ENCODE measurements at regions of chr10 and their contacts with region 1.

Region 1: GRCh38 chr10:7410862-7411670 is at the start of gene SFMBT2:
- DNase-seq: peak; percentile 70 to 90 (median 83)
- H3K4me3 ChIP-seq: peak within 1 kb of the TSS; percentile 66 to 88 (median 76)
- H3K27ac ChIP-seq: peak within 1 kb of the TSS; percentile 51 to 65
- H3K4me1 ChIP-seq: peaks cover 0 to 22% (median 0%) of the 10 kb centered on the region in 3 donors
- H3K27me3 ChIP-seq: peaks cover 22% of the 10 kb centered on the region
- CTCF ChIP-seq: peak; percentile 9
- total RNA-seq, gene SFMBT2: 15.3 TPM

Region 2: DNA sequence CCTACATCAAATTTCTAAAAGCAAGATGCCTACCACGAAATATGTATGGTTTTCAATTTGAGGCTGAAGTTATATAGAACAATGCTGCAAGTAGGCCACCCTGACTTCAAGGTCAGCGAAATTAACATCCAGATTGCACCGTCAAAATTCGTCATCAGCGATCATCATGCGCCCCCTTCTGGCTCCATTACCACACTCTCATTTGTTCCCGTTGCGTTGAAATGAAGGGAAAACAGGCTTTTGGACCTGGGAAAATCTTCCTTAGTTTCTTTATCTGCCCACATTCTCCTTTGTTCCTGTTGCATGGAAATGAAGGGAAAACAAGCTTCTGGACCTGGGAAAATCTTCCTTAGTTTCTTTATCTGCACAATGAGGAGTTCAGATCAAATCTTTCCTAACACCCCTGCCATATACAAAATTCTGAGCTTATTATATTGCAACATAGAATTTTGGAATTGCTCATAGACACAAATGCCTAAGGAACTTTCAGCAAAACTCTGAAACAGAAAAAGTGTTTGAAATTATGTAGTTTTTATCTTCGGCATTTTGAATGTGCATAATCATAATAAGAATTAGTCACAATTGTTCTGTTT is 732.8 kb before region 1 on chr10:
- intact Hi-C with region 1: loop called (anchors 10 kb)
- DNase-seq: peak in 4 of 5 donors; percentile 39 to 72 (median 59)
- H3K4me3 ChIP-seq: no peak overlapping the region
- H3K27ac ChIP-seq: no peak overlapping the region
- H3K4me1 ChIP-seq: no peaks in the 10 kb centered on the region
- H3K27me3 ChIP-seq: no peaks in the 10 kb centered on the region
- CTCF ChIP-seq: peak; percentile 82

Region 3: GRCh38 chr10:7260412-7260900 is 150.6 kb before region 1 on chr10:
- intact Hi-C with region 1: loop called (anchors 10 kb)
- DNase-seq: peak in 3 of 5 donors; percentile 15 to 87 (median 86)
- H3K4me3 ChIP-seq: no peak overlapping the region
- H3K27ac ChIP-seq: no peak overlapping the region
- H3K4me1 ChIP-seq: peaks cover 0 to 2% (median 0%) of the 10 kb centered on the region in 3 donors
- H3K27me3 ChIP-seq: no peaks in the 10 kb centered on the region
- CTCF ChIP-seq: peak; percentile 72

Region 4: DNA sequence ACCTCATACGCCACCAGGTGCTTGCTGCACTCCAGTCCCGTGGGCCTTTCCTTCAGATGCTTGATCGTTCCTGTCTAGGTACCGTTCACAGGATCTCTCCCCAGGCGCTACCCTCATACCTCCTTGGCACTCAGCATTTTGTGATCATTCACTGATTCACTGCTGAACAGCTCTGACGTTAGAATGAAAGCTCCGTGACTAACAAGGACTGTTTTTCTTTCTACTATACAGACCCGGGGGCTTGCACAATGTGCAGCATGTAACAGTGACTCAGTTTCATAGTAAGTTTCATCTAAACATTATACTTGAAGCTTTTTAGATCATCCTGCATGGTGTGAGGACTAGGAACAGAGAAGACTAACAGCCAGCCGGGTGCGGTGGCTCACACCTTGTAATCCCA is 356.1 kb after region 1 on chr10:
- intact Hi-C with region 1: no loop called
- DNase-seq: no peak
- H3K4me3 ChIP-seq: no peak overlapping the region
- H3K27ac ChIP-seq: no peak overlapping the region
- H3K4me1 ChIP-seq: no peaks in the 10 kb centered on the region
- H3K27me3 ChIP-seq: no peaks in the 10 kb centered on the region
- CTCF ChIP-seq: no peak